ENCODE measurements at regions of chr2 and their contacts with region 1.

Region 1: DNA sequence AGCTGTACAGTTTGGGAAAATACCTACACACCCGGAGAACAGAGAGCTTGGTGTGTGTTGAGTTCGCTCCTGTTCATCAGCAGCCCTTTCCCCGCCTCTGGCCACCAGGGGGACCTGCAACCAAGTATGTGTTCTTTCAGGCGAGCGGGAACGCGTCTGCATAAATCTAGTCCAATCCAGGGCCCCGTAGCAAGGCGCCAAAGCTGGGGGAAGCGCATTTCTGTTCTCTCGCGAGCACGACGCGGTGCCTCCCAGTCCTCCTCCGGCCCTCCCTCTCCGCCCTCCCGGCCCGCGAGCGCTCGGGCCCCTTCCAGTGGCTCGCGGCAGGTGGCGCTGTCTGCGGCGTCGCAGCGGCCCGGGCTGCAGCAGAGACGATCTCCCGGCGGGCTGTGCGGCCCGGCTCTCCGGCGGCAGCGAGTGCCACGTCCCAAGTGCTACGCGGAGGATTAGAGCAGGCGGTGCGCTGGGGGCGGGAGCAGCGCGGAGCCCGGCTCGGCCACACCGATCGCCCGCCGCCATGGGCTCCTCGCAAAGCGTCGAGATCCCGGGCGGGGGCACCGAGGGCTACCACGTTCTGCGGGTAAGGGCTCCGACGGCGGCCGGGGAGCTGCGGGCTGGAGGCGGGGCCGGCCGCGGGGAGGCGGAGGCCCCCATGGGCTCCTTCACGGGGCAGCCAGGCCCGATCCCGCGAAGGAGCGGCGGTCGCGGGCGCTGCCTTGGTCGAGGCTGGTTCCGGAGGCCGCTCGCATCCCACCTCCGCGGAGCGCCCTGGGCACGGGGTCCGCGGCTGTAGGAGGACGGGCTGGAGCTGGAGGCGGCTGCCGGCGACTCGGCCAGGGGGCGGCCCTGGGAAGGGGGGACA is at the start of gene GORASP2:
- DNase-seq: peak; percentile 99
- ATAC-seq: peak; percentile 94
- H3K4me3 Mint-ChIP-seq: peak within 1 kb of the TSS; percentile 96
- H3K27ac Mint-ChIP-seq: peak within 1 kb of the TSS; percentile 96
- H3K4me1 Mint-ChIP-seq: peaks cover 36% of the 10 kb centered on the region
- H3K27me3 Mint-ChIP-seq: no peaks in the 10 kb centered on the region
- total RNA-seq, gene GORASP2: 66.5 to 69.8 TPM

Region 2: GRCh38 chr2:169694113-169694903 is 1234.7 kb before region 1 on chr2 and contains the starts of genes CFAP210 and PHOSPHO2:
- CTCF ChIA-PET with region 1: interaction called, 3 read pairs
- POLR2A ChIA-PET with region 1: no interaction called
- intact Hi-C with region 1: loop called in 1 of 2 experiments (anchors 2 kb)
- DNase-seq: peak; percentile 99
- ATAC-seq: peak; percentile 99
- H3K4me3 Mint-ChIP-seq: peak within 1 kb of the TSS; percentile 84
- H3K27ac Mint-ChIP-seq: peak within 1 kb of the TSS; percentile 87
- H3K4me1 Mint-ChIP-seq: peaks cover 16% of the 10 kb centered on the region
- H3K27me3 Mint-ChIP-seq: peaks cover 3% of the 10 kb centered on the region
- total RNA-seq, gene CFAP210: 0.23 TPM in 1 of 2 experiments, not detected in the other
- total RNA-seq, gene PHOSPHO2: 2.2 to 3.5 TPM

Region 3: GRCh38 chr2:170873035-170873692 is 55.9 kb before region 1 on chr2:
- CTCF ChIA-PET with region 1: interaction called, 10 read pairs
- POLR2A ChIA-PET with region 1: no interaction called
- intact Hi-C with region 1: no loop called
- DNase-seq: peak; percentile 89
- ATAC-seq: peak; percentile 99
- H3K4me3 Mint-ChIP-seq: peak overlapping the region; percentile 40
- H3K27ac Mint-ChIP-seq: peak overlapping the region; percentile 17
- H3K4me1 Mint-ChIP-seq: peaks cover 13% of the 10 kb centered on the region
- H3K27me3 Mint-ChIP-seq: no peaks in the 10 kb centered on the region

Region 4: GRCh38 chr2:171160119-171160955 is 231.3 kb after region 1 on chr2 and contains the start of gene TLK1:
- CTCF ChIA-PET with region 1: interaction called, 4 read pairs
- POLR2A ChIA-PET with region 1: no interaction called
- intact Hi-C with region 1: loop called (anchors 1 to 2 kb)
- DNase-seq: peak; percentile 87
- ATAC-seq: peak; percentile 64
- H3K4me3 Mint-ChIP-seq: peak within 1 kb of the TSS; percentile 95
- H3K27ac Mint-ChIP-seq: peak within 1 kb of the TSS; percentile 98
- H3K4me1 Mint-ChIP-seq: peaks cover 59% of the 10 kb centered on the region
- H3K27me3 Mint-ChIP-seq: no peaks in the 10 kb centered on the region
- total RNA-seq, gene TLK1: 71.8 to 83.7 TPM

Region 5: DNA sequence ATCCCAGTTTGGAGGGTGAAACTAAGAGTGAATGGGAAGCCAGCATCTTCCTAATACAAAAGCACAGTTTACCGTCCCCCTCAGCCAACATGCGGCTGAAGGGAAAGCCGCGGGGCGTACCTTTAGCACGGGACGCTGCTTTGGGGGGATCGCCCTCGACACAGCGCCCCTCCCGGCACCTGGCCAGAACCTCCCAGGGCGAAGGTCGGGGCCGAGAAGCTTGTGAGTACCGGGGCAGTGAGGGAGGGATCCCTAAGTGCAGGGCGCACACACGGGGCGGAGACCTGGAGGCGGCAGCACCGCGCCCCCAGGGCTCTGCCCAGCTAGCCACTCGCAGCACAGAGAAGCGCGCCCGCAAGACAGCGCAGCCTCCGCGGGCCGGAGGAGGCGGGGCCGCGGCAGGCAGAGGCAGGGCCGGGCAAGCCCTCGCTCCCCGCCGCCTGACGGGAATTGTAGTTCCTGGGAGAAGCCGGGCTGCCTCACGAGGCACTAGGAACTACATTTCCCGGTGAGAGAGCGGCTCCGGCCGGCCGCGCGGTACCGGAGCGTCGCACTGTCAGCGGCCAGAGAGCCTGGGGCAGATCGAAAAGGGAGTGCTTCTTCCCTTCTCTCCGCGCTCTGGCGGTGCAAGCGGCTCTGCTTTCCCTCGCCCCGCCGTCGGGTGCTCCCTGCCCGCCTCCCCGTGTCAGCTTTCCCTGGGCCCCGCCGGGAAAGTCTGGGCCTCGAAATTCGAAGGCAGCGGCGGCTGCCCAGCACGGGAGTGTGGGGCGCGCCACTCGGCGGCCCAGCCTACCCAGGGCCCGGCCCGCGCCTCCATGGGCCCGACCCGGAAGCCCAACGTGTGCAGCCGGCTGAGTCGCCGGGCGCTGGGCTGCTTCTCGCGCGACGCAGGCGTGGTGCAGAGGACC is 505.0 kb after region 1 on chr2 and contains the starts of genes DCAF17 and METTL8:
- CTCF ChIA-PET with region 1: interaction called, 16 read pairs
- POLR2A ChIA-PET with region 1: interaction called, 17 read pairs
- intact Hi-C with region 1: loop called (anchors 1 kb)
- DNase-seq: peak; percentile 97
- ATAC-seq: peak; percentile 91
- H3K4me3 Mint-ChIP-seq: peak within 1 kb of the TSS; percentile 93
- H3K27ac Mint-ChIP-seq: peak within 1 kb of the TSS; percentile 95
- H3K4me1 Mint-ChIP-seq: peaks cover 50% of the 10 kb centered on the region
- H3K27me3 Mint-ChIP-seq: no peaks in the 10 kb centered on the region
- total RNA-seq, gene DCAF17: 18.3 TPM
- total RNA-seq, gene METTL8: 39.5 to 47.9 TPM

Region 6: GRCh38 chr2:172102391-172103278 is 1173.6 kb after region 1 on chr2 and contains the start of gene DLX2:
- CTCF ChIA-PET with region 1: no interaction called
- POLR2A ChIA-PET with region 1: no interaction called
- intact Hi-C with region 1: loop called in 1 of 2 experiments (anchors 5 kb)
- DNase-seq: peak; percentile 85
- ATAC-seq: peak; percentile 50
- H3K4me3 Mint-ChIP-seq: peak within 1 kb of the TSS; percentile 73
- H3K27ac Mint-ChIP-seq: peak within 1 kb of the TSS; percentile 66
- H3K4me1 Mint-ChIP-seq: peaks cover 48% of the 10 kb centered on the region
- H3K27me3 Mint-ChIP-seq: peaks cover 60% of the 10 kb centered on the region
- total RNA-seq, gene DLX2: not detected